ENCODE measurements at regions of chr3 and their contacts with region 1.

Region 1: DNA sequence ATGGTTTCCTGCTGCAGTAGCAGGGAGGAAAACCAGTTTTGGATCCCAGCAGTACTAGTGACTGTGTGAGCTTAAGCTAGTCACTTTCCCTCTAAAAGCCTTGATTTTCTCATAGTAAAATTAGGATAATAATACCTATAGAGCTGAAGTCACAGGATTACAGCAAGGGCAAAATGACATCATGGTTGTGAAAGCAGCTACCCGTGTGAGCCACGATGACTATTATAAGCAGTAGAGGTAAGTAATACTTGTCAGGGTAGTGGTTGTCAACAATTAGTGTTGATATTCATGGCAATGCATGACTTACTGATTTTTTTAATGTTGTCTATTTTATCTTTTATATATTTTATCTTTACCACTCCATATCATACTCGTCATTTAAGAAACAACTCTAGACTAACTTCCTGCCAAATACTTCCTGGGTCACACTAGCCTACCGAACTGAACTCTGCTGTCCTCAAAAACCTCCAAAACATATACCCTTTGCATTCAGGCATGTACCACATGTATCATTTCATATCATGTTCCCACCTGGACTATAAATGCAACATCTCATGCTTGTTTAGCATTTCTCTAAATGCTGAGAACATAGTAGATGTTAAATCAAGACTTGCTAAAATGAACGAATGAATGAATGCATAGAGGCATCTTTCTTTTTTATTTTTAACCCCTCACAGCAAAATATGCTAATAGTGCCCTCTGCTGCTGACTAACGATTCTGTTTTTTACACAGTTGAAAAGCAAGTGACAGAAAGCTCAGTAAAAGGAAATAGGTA is 172.6 kb downstream of the P3H2 start:
- DNase-seq: no peak
- H3K4me3 ChIP-seq: no peak overlapping the region
- H3K27ac ChIP-seq: no peak overlapping the region
- H3K4me1 ChIP-seq: no peaks in the 10 kb centered on the region
- H3K27me3 ChIP-seq: no peaks in the 10 kb centered on the region
- CTCF ChIP-seq: peak in 2 of 3 experiments; percentile 55 to 56; a peak in 2 of 4 replicates
- EP300 ChIP-seq: no peak
- POLR2A ChIP-seq: no peak
- RAD21 ChIP-seq: peak; percentile 90

Region 2: GRCh38 chr3:189685854-189686253 is 262.3 kb before region 1 on chr3:
- CTCF ChIA-PET with region 1: interaction called, 68 read pairs
- POLR2A ChIA-PET with region 1: no interaction called
- DNase-seq: no peak
- H3K4me3 ChIP-seq: no peak overlapping the region
- H3K27ac ChIP-seq: no peak overlapping the region
- H3K4me1 ChIP-seq: no peaks in the 10 kb centered on the region
- H3K27me3 ChIP-seq: no peaks in the 10 kb centered on the region
- CTCF ChIP-seq: no peak
- EP300 ChIP-seq: no peak
- POLR2A ChIP-seq: no peak
- RAD21 ChIP-seq: no peak

Region 3: GRCh38 chr3:189937307-189938124 is 10.6 kb before region 1 on chr3:
- CTCF ChIA-PET with region 1: interaction called, 30 read pairs
- POLR2A ChIA-PET with region 1: no interaction called
- DNase-seq: no peak
- H3K4me3 ChIP-seq: no peak overlapping the region
- H3K27ac ChIP-seq: no peak overlapping the region
- H3K4me1 ChIP-seq: no peaks in the 10 kb centered on the region
- H3K27me3 ChIP-seq: no peaks in the 10 kb centered on the region
- CTCF ChIP-seq: no peak
- EP300 ChIP-seq: no peak
- POLR2A ChIP-seq: no peak
- RAD21 ChIP-seq: no peak

Region 4: DNA sequence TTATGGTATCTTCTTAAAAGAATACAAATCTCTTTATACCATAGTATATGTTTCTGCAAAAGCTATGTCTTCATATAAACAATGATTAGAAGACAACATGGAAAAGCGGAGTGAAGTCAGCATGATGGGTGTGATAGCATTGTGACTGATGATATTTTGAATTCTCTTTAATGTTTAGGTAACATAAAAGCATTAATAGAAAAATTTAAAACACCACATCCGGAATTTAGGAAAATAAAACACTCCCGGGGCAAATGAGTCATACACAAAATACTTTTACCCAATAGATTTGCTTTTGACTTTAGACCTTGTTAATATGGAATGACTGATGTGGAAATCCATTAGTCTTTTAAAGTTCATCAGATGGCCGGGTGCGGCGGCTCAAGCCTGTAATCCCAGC is 37.8 kb after region 1 on chr3:
- CTCF ChIA-PET with region 1: no interaction called
- POLR2A ChIA-PET with region 1: no interaction called
- DNase-seq: no peak
- H3K4me3 ChIP-seq: no peak overlapping the region
- H3K27ac ChIP-seq: no peak overlapping the region
- H3K4me1 ChIP-seq: peaks cover 3 to 27% (median 12%) of the 10 kb centered on the region in 4 experiments; a peak in 6 of 7 replicates
- H3K27me3 ChIP-seq: no peaks in the 10 kb centered on the region; a peak in 1 of 7 replicates
- CTCF ChIP-seq: no peak
- EP300 ChIP-seq: no peak
- POLR2A ChIP-seq: no peak
- RAD21 ChIP-seq: no peak

Region 5: DNA sequence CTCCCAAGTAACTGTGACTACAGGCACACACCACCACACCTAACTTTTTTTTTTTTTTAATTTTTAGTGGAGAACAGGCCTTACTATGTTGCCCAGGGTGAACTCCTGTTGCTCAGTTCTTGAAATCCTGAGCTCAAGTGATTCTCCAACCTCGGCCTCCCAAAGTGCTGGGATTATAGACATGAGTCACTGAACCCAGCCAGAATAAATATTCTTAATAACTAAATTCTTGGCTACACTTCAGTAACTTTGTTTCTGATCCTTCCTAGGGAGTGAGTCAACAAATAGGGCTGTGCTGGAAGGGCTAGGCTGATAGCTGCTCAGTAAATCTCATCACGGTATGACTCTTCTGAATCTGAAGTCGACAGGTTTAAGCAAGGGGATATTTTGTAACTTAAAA is 116.0 kb after region 1 on chr3:
- CTCF ChIA-PET with region 1: no interaction called
- POLR2A ChIA-PET with region 1: no interaction called
- DNase-seq: no peak
- H3K4me3 ChIP-seq: no peak overlapping the region
- H3K27ac ChIP-seq: no peak overlapping the region
- H3K4me1 ChIP-seq: peaks cover 0 to 4% (median under 1%) of the 10 kb centered on the region in 4 experiments; a peak in 3 of 7 replicates
- H3K27me3 ChIP-seq: no peaks in the 10 kb centered on the region
- CTCF ChIP-seq: no peak
- EP300 ChIP-seq: no peak
- POLR2A ChIP-seq: no peak
- RAD21 ChIP-seq: no peak